Transverse colon (tissue), 4 donors: ENCODE measurements at regions of chr19 and their contacts with region 1.

Region 1: GRCh38 chr19:44626048-44626624 is 12.8 kb downstream of the IGSF23 start:
- DNase-seq: no peak
- H3K4me3 ChIP-seq: no peak overlapping the region
- H3K27ac ChIP-seq: no peak overlapping the region
- H3K4me1 ChIP-seq: peaks cover 0 to 3% (median 0%) of the 10 kb centered on the region in 4 donors
- H3K27me3 ChIP-seq: no peaks in the 10 kb centered on the region
- CTCF ChIP-seq: no peak
- EP300 ChIP-seq: no peak
- POLR2A ChIP-seq: no peak

Region 2: DNA sequence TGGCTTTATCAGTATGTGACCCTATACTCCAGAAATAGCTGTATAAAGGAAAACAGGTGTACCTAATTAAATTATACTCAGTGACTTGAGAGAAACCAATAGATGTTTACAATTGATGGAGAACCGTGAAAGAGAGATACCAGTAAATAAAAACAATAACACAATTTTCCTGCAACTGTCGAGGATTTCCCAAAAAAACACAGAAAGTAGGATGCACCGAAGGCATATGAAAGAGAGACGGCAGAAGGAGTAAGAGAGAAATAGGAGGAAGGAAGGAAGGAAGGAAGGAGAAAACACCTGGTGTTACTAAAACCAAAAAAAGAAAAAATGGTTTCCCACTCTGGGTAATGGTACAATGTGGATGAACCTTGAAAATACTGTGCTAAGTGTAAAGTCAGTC is 171.0 kb before region 1 on chr19:
- in situ Hi-C with region 1: no loop called
- intact Hi-C with region 1: no loop called
- DNase-seq: no peak
- H3K4me3 ChIP-seq: no peak overlapping the region
- H3K27ac ChIP-seq: no peak overlapping the region
- H3K4me1 ChIP-seq: no peaks in the 10 kb centered on the region
- H3K27me3 ChIP-seq: no peaks in the 10 kb centered on the region
- CTCF ChIP-seq: no peak
- EP300 ChIP-seq: no peak
- POLR2A ChIP-seq: no peak

Region 3: DNA sequence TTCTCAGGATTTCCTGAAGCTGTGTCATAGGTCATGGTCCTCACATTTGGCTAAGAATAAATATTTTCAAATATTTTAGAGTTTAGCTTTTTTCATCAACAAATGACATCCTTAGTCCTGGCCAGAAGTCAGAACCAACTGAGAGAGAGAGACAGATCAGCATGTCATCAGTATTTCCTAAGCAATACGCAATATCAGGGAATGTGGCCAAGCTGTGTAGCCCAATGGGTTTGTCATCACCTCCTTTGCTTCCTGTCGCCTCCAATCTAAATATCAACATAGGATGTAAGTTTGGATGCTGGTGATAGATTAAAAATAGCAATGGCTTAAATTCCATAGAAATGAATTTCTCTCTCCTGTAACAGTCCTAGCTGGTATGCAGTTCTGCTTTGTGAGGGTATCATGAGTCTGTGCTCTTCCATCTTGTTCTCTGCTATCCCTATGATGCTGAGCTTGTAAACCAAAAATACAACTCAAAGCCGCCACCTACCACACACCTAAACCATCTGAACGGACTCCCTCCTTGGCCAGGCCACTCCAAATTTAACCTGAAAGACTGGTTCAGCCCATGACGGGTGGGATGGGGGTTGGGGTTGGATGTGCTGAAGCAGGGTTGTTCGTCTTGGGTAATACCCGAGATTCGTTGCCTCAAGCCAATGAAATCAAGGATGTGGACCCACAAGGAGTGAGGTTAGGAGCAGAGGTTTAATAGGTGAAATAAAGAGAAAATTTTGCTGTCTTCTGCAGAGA is 22.8 kb before region 1 on chr19:
- in situ Hi-C with region 1: no loop called
- intact Hi-C with region 1: loop called (anchors 1 kb)
- DNase-seq: no peak
- H3K4me3 ChIP-seq: no peak overlapping the region
- H3K27ac ChIP-seq: no peak overlapping the region
- H3K4me1 ChIP-seq: peaks cover 0 to 40% (median 12%) of the 10 kb centered on the region in 4 donors
- H3K27me3 ChIP-seq: no peaks in the 10 kb centered on the region
- CTCF ChIP-seq: no peak
- EP300 ChIP-seq: no peak
- POLR2A ChIP-seq: no peak